Aorta (tissue), 5 donors: ENCODE measurements at regions of chr19 and their contacts with region 1.

Region 1: DNA sequence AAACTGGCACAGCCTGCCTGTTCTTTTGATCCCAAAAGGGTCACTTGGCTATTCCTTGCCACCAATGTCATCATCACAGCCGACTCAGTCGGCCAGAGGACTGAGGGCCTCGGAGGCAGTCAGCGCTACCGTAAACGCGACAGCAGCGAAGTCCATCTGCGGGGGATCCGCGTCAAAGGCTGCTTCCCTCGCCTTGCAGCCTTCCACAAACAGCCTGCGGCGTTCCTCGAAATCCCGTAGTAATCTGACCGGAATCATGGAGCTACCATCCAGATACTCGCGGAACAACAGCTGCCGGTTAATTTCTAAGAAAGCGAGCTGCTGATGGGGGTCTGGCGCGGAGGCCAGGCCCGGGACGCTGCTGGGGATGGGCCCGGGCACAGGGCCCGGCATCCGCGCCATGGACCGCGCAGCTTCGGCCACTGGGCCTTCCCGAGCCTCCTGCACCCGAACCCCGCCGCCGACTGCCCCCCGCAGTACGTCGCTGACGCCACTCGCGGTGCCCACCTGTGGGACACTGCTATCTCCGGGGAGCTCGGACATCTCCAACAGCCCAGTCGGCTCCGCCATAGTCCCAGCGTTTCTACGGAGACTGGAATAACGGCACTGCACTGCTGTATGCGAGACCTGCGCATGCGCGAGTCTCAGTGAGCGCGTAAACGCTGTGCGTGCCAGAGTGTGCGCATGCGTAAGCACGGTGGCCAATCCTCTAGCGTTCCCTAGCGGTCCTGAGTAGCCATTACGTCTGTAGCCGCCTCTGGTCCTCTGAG is at the start of gene EID2B:
- DNase-seq: peak; percentile 97 to 99
- ATAC-seq: peak; percentile 99
- H3K4me3 ChIP-seq: peak within 1 kb of the TSS; percentile 77 to 95
- H3K27ac ChIP-seq: peak within 1 kb of the TSS in 1 of 2 donors; percentile 93
- H3K4me1 ChIP-seq: no peaks in the 10 kb centered on the region
- H3K27me3 ChIP-seq: no peaks in the 10 kb centered on the region
- total RNA-seq, gene EID2B: 3.2 to 3.3 TPM

Region 2: DNA sequence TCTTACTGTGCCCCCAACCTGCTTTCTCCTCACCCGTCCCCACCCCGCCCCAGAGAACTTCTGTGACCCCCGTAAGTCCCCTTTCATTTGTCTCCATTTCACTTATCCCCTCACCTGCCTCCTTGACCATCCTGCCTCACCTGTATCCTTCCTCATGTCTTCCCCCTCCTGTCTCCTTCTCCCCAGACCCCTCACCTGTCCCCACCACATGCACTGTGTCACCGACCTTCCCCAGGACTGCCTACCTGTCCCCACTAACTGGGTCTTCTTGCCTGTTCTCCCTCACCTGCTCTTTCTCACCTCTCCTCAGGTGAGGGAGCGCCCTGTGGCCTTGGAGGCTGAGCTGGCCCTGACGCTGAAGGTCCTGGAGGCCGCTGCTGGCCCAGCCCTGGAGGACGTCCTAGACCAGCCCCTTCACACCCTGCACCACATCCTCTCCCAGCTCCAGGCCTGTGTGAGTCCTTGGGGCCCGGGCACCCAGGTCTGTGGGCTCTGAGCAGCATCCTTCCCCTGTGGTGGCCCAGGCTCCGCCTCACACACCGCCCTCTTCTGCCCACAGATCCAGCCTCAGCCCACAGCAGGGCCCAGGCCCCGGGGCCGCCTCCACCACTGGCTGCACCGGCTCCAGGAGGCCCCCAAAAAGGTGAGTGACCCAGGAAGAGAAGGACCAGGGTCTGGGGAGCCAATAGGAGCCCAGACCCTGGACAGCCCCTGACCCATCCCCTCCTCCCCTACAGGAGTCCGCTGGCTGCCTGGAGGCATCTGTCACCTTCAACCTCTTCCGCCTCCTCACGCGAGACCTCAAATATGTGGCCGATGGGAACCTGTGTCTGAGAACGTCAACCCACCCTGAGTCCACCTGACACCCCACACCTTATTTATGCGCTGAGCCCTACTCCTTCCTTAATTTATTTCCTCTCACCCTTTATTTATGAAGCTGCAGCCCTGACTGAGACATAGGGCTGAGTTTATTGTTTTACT is 234.5 kb before region 1 on chr19:
- intact Hi-C with region 1: no loop called
- DNase-seq: peak; percentile 61 to 66
- ATAC-seq: peak; percentile 15
- H3K4me3 ChIP-seq: no peak overlapping the region
- H3K27ac ChIP-seq: no peak overlapping the region
- H3K4me1 ChIP-seq: no peaks in the 10 kb centered on the region
- H3K27me3 ChIP-seq: no peaks in the 10 kb centered on the region

Region 3: DNA sequence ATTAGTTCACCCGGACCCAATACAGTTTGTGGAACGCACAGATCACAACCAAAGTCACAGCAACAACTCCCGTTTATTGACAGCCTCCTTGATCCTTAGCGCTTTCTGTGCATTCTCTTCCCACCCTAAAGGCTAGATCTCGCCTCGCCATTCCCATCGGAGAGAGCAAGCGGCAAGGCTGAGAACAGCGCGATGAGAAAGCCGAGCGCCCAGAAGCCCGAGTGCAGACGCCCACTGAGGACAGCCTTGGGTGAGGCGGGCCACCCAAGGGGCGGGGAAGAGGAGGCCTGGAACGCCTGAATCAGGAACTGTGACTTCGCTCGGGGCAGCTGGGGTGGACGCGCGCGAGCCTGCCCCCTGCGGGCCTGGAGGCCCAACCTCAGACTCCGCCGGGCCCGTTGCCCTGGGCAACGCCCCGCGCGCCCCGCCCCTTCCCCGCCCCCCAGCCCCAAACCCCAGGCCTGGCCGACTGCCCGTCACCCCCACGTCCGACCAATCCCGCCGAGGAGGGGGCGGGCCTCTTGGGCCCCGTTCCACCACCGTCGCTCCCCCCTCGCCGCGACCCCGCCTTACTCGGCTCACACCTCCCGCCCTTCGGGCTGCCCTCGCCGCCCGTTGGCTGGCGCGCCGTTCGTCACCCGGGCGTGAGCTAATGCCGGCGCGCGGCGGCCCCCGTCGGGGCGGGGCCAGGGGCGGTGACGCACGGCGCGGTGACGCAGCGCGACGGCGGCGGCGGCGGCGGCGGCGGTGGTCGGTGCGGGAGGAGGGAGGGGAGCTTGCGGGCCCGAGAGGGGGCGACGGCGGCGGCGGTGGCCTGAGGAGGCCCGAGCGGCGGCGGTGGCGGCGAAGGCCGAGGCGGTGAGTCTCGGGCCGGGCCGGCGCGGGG is 190.5 kb before region 1 on chr19 and contains the start of gene SAMD4B:
- intact Hi-C with region 1: loop called (anchors 5 to 10 kb)
- DNase-seq: peak; percentile 99
- ATAC-seq: peak; percentile 97
- H3K4me3 ChIP-seq: peak within 1 kb of the TSS; percentile 92 to 99
- H3K27ac ChIP-seq: peak within 1 kb of the TSS; percentile 52 to 65
- H3K4me1 ChIP-seq: no peaks in the 10 kb centered on the region
- H3K27me3 ChIP-seq: no peaks in the 10 kb centered on the region
- total RNA-seq, gene SAMD4B: 101 to 120 TPM

Region 4: DNA sequence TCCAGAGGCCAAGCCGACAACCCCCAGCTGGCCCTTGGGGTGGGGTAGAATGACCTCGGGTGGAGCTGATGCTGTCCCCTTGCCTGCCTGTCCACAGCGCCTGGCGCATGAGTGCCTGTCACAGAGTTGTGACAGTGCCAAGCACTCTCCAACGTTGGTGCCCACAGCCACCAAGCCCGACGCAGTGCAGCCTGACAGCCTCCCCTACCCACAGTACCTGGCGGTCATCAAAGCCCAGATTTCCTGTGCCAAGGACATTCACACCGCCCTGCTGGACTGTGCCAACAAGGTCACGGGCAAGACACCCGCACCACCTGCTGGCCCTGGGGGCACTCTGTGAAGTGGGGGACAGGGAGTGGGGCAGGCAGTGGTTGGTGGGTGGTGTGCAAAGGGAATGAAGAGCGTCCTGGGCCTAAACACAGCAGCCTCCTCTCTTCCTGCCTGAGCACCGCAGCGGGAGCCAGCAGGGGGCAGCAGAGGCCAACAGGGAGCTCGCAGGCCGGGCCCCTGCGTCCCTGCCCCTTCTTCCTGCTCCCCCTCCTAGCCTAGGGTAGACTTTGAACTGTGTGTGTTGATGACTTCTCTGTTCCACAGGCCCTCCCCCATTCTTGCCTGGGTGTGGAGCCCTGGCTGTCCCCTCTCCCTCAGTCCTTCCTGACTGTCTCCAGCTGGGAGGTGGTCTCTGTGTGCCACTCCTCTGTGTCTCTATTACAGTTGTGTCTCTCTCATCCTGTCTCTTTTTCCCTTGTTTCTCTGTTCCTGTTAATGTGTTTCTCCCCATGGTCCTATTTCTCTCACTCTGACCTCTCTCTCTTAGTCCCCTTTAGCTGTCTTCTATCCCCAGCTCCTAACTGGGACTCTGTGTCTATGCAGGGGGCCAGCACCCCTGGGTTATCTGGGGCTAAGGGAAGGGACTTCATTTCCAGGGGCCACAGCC is 134.8 kb before region 1 on chr19:
- intact Hi-C with region 1: loop called in 1 of 2 experiments (anchors 5 kb)
- DNase-seq: peak; percentile 94 to 97
- ATAC-seq: peak; percentile 88
- H3K4me3 ChIP-seq: no peak overlapping the region
- H3K27ac ChIP-seq: peak overlapping the region in 1 of 2 donors; percentile 86
- H3K4me1 ChIP-seq: no peaks in the 10 kb centered on the region
- H3K27me3 ChIP-seq: no peaks in the 10 kb centered on the region

Region 5: DNA sequence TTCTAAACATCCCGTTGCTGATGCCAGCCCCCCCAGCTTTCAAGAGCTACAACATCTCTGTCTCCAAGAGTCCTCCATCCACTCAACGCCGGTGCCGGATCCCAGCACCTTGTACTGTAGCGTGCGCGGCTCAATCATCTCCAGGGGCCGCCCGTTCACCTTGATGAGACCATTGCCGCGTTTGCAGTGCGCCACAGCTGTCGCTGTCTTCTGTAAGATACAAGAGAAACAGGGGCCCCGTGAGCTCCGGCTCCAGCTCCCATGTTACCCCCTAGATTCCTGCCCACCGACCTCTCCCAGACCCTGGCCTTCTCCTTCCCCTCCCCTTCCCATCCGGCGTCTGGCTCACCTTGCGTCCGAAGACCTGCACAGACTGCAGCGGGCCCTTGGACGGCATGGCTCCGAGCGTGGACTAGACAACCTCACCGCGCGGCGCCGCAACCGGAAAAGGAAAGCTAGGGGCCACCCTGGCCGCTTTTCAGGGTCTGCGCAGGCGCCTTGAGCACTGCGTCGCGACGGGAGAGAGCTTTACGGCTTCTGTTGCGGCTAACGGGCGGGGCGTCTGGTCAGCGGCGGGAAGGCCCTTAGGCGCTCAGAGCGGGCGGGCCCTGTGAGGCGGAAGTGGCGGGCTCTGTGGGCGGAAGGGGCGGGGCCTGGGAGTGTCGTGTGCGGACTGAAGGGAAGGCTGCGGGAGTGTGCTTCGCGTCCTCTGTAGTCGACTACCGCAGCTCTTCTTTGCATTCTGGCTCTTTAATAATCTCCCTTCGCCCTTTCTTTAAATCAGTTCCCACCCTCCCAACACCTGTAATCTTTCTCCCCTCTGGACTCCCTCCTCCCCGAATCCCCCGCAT is 96.7 kb before region 1 on chr19 and contains the start of gene RPS16:
- intact Hi-C with region 1: loop called (anchors 5 to 10 kb)
- DNase-seq: peak; percentile 99 to 100
- ATAC-seq: peak; percentile 99
- H3K4me3 ChIP-seq: peak within 1 kb of the TSS; percentile 31 to 61
- H3K27ac ChIP-seq: peak within 1 kb of the TSS in 1 of 2 donors; percentile 49
- H3K4me1 ChIP-seq: peaks cover 0 to 2% of the 10 kb centered on the region in 2 donors
- H3K27me3 ChIP-seq: no peaks in the 10 kb centered on the region
- total RNA-seq, gene RPS16: 1,268 to 1,273 TPM

Region 6: GRCh38 chr19:39445265-39446111 is 86.9 kb before region 1 on chr19 and contains the start of gene SUPT5H:
- intact Hi-C with region 1: loop called in 1 of 2 experiments (anchors 10 kb)
- DNase-seq: peak; percentile 98 to 99
- ATAC-seq: peak; percentile 99
- H3K4me3 ChIP-seq: peak within 1 kb of the TSS; percentile 79 to 94
- H3K27ac ChIP-seq: peak within 1 kb of the TSS; percentile 58 to 82
- H3K4me1 ChIP-seq: peaks cover 0 to 2% of the 10 kb centered on the region in 2 donors
- H3K27me3 ChIP-seq: no peaks in the 10 kb centered on the region
- total RNA-seq, gene SUPT5H: 90.1 to 103 TPM

Region 7: GRCh38 chr19:39474139-39474622 is 58.2 kb before region 1 on chr19:
- intact Hi-C with region 1: loop called (anchors 5 kb)
- DNase-seq: peak in 1 of 2 donors; percentile 88
- ATAC-seq: peak; percentile 70
- H3K4me3 ChIP-seq: no peak overlapping the region
- H3K27ac ChIP-seq: no peak overlapping the region
- H3K4me1 ChIP-seq: no peaks in the 10 kb centered on the region
- H3K27me3 ChIP-seq: no peaks in the 10 kb centered on the region

Region 8: DNA sequence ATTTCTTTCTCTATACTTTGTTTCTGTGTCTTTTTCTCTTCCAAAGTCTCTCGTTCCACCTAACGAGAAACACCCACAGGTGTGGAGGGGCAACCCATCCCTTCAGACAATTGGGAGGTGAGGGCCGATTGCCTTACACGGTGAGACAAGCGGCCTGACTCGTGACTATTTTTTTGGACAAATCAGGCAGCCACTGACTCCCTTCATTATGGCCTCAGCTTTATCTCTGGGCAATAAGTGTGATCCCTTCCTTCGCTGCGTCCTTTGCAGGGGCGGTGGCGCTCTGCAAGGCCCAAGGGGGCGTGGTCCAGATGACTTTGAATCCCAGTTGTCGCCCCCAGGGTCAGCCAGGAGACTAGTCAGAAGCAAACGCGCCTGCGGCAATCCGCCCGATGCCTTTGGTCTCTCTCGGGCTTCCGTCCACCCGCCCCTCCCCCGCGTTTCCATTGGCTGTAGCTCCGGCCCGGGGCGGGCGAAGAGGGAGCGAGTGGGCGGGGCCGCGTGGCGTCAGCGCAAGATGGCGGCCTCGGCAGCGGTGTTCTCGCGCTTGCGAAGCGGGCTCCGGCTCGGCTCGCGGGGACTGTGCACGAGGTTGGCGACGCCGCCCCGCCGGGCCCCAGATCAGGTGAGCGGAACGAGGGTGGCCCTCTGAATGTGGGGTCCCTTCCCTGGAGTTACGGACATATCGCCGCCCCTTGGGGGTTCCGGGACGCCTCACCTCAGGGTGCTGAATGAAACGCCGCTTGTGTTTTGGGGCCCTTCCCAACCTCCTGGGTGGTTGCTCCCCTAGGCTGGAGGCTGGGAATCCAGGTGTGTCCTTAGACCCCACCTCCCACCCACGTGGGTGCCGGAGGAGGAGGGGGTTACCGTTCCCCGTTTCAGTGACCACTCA is 51.8 kb before region 1 on chr19 and contains the start of gene TIMM50:
- intact Hi-C with region 1: loop called in 1 of 2 experiments (anchors 2 kb)
- DNase-seq: peak; percentile 98 to 100
- ATAC-seq: peak; percentile 98
- H3K4me3 ChIP-seq: peak within 1 kb of the TSS; percentile 63 to 72
- H3K27ac ChIP-seq: peak within 1 kb of the TSS in 1 of 2 donors; percentile 30
- H3K4me1 ChIP-seq: no peaks in the 10 kb centered on the region
- H3K27me3 ChIP-seq: no peaks in the 10 kb centered on the region
- total RNA-seq, gene TIMM50: 31.1 to 39.5 TPM

Region 9: GRCh38 chr19:39696418-39696817 is 164.0 kb after region 1 on chr19:
- intact Hi-C with region 1: no loop called
- DNase-seq: no peak
- ATAC-seq: no peak
- H3K4me3 ChIP-seq: no peak overlapping the region
- H3K27ac ChIP-seq: no peak overlapping the region
- H3K4me1 ChIP-seq: no peaks in the 10 kb centered on the region
- H3K27me3 ChIP-seq: no peaks in the 10 kb centered on the region